ENCODE measurements at regions of chr20 and their contacts with region 1.

Region 1: GRCh38 chr20:13546497-13547131 is 92.1 kb downstream of the TASP1 start:
- DNase-seq: peak; percentile 30
- H3K4me3 ChIP-seq: no peak overlapping the region
- H3K27ac ChIP-seq: no peak overlapping the region
- H3K27me3 ChIP-seq: no peaks in the 10 kb centered on the region
- CTCF ChIP-seq: peak; percentile 75

Region 2: DNA sequence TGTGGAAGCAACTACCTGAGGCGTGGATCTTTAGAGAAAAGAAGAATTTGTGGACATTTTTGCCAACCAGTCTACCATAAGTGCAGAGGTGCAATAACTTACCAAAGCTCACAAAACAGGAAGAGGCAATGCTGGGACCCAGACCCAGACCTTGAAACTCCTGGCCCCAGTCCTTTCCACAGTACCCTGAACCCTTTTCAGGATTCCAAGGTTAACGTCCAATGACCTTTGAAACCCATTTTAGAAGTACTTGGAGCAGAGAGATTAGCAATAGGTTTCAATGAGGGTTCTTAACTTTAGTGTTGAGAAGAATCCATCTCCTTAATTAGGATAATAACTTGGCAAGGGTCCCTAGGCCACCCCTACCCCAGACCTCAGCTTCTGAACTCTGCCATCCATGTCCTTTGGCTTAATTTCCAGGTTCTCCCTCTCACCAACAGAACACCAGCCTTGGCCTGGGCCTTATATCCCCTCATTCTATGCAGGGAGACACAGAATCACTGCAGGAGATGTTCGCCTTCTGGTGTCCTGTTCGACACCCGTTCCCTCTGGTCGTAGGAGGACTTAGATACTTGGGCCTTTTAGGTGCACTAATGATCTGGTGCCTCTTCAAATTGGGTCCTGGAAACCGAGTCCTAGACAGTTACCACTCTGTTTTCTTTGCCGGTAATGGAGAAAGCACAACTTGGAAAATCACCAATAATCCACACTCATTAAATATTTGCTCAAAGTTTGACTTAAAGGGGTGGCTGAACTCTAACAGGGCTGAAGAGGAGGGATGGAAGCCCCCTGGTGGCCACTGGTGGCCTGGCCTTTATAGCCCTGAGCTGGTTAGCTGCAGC is 284.9 kb before region 1 on chr20:
- CTCF ChIA-PET with region 1: interaction called, 13 read pairs
- POLR2A ChIA-PET with region 1: no interaction called
- DNase-seq: peak; percentile 8
- H3K4me3 ChIP-seq: no peak overlapping the region
- H3K27ac ChIP-seq: no peak overlapping the region
- H3K27me3 ChIP-seq: no peaks in the 10 kb centered on the region
- CTCF ChIP-seq: peak; percentile 83

Region 3: DNA sequence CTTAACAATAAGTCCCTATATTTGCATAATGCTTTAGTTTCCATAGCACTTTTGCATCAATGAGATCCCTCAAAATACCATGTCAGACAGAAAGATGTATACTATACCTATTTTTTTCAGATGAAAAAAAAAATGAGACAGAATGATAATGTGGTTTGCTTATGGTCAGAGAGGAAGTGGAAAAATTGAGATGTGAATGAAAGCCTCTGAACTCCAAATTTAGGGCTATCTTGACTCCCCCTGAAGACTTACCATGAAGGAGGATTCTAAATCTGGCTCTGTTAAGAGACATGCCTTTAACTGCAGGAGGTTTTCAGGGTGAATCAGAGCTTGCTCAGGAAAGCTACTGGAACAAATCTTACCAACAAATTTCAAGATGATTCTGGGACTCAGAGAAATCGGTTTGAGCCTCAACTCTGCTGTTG is 149.3 kb before region 1 on chr20:
- CTCF ChIA-PET with region 1: interaction called, 20 read pairs
- POLR2A ChIA-PET with region 1: no interaction called
- DNase-seq: no peak
- H3K4me3 ChIP-seq: no peak overlapping the region
- H3K27ac ChIP-seq: no peak overlapping the region
- H3K27me3 ChIP-seq: no peaks in the 10 kb centered on the region
- CTCF ChIP-seq: no peak

Region 4: GRCh38 chr20:13458860-13459451 is 87.7 kb before region 1 on chr20:
- CTCF ChIA-PET with region 1: interaction called, 19 read pairs
- POLR2A ChIA-PET with region 1: no interaction called
- DNase-seq: no peak
- H3K4me3 ChIP-seq: no peak overlapping the region
- H3K27ac ChIP-seq: no peak overlapping the region
- H3K27me3 ChIP-seq: no peaks in the 10 kb centered on the region
- CTCF ChIP-seq: peak; percentile 84

Region 5: GRCh38 chr20:13533946-13534345 is 12.7 kb before region 1 on chr20:
- CTCF ChIA-PET with region 1: interaction called, 59 read pairs
- POLR2A ChIA-PET with region 1: no interaction called
- DNase-seq: no peak
- H3K4me3 ChIP-seq: no peak overlapping the region
- H3K27ac ChIP-seq: no peak overlapping the region
- H3K27me3 ChIP-seq: no peaks in the 10 kb centered on the region
- CTCF ChIP-seq: no peak

Region 6: DNA sequence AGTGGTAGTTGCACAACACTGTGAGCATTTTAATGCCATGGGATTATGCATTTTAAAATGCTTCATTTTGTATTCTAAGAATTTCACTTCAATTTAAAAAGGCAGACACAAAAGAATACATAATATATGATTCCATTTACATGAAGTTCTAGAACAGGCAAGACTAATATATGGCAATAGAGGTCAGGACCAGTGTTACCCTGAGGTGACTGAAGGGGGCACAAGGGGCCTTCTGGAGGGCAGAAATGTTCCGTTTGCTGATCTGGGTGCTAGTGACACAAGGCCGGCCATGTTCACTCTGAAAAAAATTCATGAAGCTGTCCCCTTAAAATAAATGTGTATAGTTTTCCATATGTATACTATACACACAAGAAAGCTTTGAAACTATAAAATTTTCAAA is 63.6 kb after region 1 on chr20:
- CTCF ChIA-PET with region 1: interaction called, 12 read pairs
- POLR2A ChIA-PET with region 1: no interaction called
- DNase-seq: no peak
- H3K4me3 ChIP-seq: no peak overlapping the region
- H3K27ac ChIP-seq: no peak overlapping the region
- H3K27me3 ChIP-seq: no peaks in the 10 kb centered on the region
- CTCF ChIP-seq: no peak

Region 7: GRCh38 chr20:13654463-13655023 is 107.9 kb after region 1 on chr20:
- CTCF ChIA-PET with region 1: no interaction called
- POLR2A ChIA-PET with region 1: no interaction called
- DNase-seq: no peak
- H3K4me3 ChIP-seq: no peak overlapping the region
- H3K27ac ChIP-seq: no peak overlapping the region
- H3K27me3 ChIP-seq: peaks cover 3% of the 10 kb centered on the region
- CTCF ChIP-seq: no peak